GM10248 (cell line): ENCODE measurements at regions of chr5 and their contacts with region 1.

Region 1: DNA sequence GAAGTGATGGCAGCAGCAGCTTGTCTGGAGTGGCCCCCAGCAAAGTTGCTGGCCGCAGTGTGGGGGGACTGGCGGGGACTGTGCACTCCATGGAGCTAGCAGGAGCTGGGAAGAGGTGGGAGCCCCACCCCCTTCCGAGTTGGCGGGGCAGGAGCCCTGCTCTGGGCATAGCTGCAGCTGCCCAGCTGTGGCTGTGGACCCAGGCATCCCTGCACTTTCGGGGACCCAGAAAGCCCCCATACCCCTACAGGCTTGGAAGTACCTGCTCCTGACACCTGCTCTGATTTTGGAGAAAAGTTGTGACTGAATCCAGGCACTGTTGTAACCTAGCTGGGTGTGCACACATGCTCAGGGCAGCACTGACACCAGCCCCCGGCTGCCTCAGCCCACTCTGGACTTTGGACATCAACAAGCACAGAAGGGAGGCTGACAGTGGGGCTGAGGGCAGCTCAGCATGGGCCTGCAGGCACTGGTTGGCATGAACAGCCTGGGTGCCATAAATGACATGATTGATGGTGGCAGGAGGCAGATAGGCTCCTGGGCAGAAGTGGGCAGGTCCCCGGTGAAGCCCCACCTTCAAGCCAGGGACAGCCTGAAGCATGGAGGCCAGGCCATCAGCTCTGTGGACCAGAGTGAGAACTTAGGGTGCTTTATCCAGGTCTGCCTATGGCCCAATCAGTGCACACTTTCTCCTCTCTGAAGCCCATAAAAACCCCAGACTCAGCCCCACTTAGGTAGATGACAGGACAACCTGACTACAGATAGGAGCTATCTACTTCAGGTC is 12.6 kb downstream of the LMBRD2 start:
- DNase-seq: no peak
- CTCF ChIP-seq: no peak

Region 2: GRCh38 chr5:36128795-36129194 is 10.3 kb before region 1 on chr5:
- CTCF ChIA-PET with region 1: interaction called, 10 read pairs
- POLR2A ChIA-PET with region 1: no interaction called
- DNase-seq: no peak
- CTCF ChIP-seq: no peak

Region 3: GRCh38 chr5:36230151-36230793 is 91.2 kb after region 1 on chr5:
- CTCF ChIA-PET with region 1: no interaction called
- POLR2A ChIA-PET with region 1: no interaction called
- DNase-seq: no peak
- CTCF ChIP-seq: no peak